ENCODE measurements at regions of chr4 and their contacts with region 1.

Region 1: GRCh38 chr4:173334085-173334772 is at the start of gene HMGB2:
- DNase-seq: peak; percentile 100
- H3K4me3 Mint-ChIP-seq: peak within 1 kb of the TSS; percentile 89
- H3K27ac Mint-ChIP-seq: peak within 1 kb of the TSS; percentile 100
- H3K4me1 Mint-ChIP-seq: peaks cover 45% of the 10 kb centered on the region
- H3K27me3 Mint-ChIP-seq: peaks cover 6% of the 10 kb centered on the region

Region 2: GRCh38 chr4:173088144-173088543 is 246.1 kb before region 1 on chr4:
- CTCF ChIA-PET with region 1: no interaction called
- DNase-seq: no peak
- H3K4me3 Mint-ChIP-seq: no peak overlapping the region
- H3K27ac Mint-ChIP-seq: no peak overlapping the region
- H3K4me1 Mint-ChIP-seq: no peaks in the 10 kb centered on the region
- H3K27me3 Mint-ChIP-seq: no peaks in the 10 kb centered on the region

Region 3: DNA sequence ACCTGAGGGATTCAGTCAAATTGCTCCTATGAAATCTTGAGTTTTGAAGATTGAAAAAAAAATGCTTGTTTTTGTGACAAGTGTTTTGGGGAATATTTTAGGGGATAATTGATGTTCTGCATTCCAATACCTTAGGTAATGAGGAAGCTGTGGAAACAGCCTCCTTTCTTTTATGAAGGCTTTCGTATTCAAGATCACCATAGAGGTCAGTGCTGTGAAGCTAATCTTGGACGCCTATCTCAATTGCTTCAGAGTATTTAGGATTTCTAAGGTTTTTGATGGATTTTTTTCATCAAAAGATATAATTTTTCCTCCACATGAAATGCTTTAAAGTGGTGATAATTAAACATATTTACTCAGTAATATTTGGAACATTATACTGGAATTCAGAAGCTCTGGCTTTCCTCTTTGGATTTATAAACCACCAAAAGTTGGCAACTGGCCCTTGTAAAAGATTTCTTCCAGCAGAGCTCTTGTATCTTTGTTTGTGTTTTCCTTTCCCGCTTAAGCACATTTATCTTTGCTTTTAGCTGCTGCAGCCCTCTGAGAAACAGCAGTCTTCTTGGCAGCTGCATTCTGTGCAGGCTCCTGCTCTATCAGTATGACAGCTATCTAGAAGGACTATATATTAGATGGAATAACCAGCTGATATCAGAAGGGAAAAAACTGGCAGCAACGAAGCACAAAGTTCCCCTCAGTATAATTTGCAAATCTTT is 63.8 kb before region 1 on chr4:
- CTCF ChIA-PET with region 1: no interaction called
- DNase-seq: no peak
- H3K4me3 Mint-ChIP-seq: no peak overlapping the region
- H3K27ac Mint-ChIP-seq: no peak overlapping the region
- H3K4me1 Mint-ChIP-seq: peaks cover 3% of the 10 kb centered on the region
- H3K27me3 Mint-ChIP-seq: no peaks in the 10 kb centered on the region

Region 4: DNA sequence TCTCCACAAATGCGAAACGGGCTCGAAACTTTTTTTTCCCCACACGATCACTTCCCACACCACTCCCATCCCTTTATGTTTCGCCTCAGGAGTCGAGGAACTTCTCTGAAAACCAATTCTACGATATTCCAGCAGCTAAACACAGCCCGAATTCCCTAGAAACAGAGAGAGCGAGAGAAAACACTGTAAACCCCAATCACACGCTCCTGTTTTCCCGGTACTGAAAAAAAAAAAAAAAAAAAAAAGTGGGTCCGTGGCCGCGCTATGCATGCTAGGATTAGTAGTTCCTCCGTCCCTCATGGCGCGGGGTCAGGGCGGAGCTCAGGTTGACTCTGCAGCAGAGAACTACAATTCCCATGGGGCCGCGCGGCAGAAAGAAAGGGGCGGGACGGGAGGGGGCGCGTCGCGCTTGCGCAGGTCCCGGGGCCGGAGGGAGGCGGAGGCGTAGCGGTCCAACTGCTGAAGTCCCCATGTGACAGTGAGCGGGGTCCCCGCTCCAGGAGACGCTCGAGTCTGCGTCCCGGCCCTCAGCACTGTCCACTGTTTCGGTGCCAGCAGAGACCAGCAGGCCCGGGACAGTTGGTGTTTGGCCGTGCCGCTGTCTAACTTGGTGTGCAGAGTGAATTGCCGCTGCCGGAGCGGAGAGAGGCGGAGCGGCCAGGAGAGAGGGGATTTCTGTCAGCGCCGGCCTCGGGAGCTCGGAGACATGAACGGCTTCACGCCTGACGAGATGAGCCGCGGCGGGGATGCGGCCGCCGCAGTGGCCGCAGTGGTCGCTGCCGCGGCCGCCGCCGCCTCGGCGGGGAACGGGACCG is 36.5 kb after region 1 on chr4 and contains the start of gene SAP30:
- CTCF ChIA-PET with region 1: interaction called, 44 read pairs
- DNase-seq: peak; percentile 98
- H3K4me3 Mint-ChIP-seq: peak within 1 kb of the TSS; percentile 100
- H3K27ac Mint-ChIP-seq: peak within 1 kb of the TSS; percentile 99
- H3K4me1 Mint-ChIP-seq: peaks cover 51% of the 10 kb centered on the region
- H3K27me3 Mint-ChIP-seq: peaks cover 16% of the 10 kb centered on the region